Gastrocnemius medialis (tissue), 4 donors: ENCODE measurements at regions of chr7 and their contacts with region 1.

Region 1: DNA sequence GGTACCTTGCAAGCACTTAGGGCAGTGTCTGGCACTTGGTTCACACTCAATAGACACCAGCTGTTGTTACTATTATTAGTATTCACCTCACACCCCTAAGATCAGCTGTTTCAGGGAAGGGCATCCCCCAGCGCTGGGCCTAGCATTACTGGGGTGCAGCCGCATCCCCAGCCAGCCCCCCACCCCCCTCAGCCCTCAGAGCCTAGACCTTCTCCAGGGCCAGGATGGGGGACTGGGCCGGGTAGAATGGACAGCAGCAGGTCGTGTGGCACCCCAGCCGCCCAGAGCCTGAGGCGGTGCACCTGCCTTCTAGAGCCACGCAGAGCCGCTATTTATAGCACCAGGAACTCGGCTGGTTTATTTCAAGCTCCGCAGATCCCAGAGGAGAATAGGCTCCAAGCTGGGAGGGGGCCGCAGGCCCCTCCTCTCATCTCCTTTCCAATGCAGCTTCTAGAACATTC is 60.5 kb downstream of the GTF2IRD1 start:
- DNase-seq: peak; percentile 68 to 78
- ATAC-seq: peak; percentile 93 to 94
- H3K4me3 ChIP-seq: peak overlapping the region in 1 of 4 donors; percentile 6
- H3K27ac ChIP-seq: peak overlapping the region; percentile 90 to 96 (median 94)
- H3K4me1 ChIP-seq: peaks cover 26% of the 10 kb centered on the region in 2 donors
- H3K27me3 ChIP-seq: no peaks in the 10 kb centered on the region
- CTCF ChIP-seq: no peak
- POLR2A ChIP-seq: peak; percentile 49 to 74

Region 2: GRCh38 chr7:74443543-74444247 is 70.5 kb before region 1 on chr7:
- in situ Hi-C with region 1: loop called in 1 of 4 experiments (anchors 5 kb)
- intact Hi-C with region 1: no loop called
- DNase-seq: no peak
- ATAC-seq: no peak
- H3K4me3 ChIP-seq: no peak overlapping the region
- H3K27ac ChIP-seq: no peak overlapping the region
- H3K4me1 ChIP-seq: no peaks in the 10 kb centered on the region
- H3K27me3 ChIP-seq: no peaks in the 10 kb centered on the region
- CTCF ChIP-seq: no peak
- POLR2A ChIP-seq: no peak

Region 3: DNA sequence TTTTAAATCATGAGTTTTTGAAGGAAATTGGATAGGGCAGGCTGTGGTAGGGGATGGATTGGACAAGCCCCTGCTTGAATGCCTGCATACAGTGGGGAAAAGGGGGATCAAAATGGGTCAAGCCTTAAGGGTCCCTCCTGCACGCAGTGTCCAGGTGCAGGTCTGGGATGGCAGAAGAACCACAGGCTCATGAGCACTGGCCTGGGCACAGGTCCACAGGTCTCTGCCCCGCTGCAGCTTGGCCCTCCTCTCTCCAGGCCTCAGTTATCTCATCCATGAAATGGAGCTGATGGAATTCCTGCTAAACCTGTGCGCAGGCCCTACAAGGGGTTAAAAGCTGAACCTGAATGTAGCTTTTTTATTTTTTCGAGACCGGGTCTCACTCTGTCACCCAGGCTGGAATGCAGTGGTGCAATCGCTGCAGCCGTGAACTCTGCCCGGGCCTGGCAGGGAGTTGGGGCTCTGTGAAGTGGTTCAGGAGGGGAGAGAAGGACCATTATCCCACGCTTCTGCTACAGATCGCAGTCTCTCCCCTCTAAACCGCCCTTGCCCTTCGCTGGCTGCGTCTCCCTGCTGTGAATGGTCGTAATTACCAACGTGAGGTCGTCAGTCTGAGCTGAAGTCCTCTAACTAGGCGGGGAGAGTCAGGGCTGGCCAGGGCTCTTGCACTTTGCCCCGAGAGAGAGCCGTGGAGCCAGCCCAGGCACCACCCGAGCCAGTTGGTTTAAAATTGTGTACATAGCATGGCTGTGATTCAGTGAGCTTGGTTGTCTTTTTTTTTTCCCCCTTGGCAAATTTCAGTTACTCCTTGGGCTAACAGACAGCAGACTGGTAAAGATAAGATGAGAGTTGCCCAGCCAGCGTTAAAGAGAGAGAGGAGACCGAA is 65.9 kb after region 1 on chr7:
- in situ Hi-C with region 1: no loop called
- intact Hi-C with region 1: no loop called
- DNase-seq: no peak
- ATAC-seq: peak in 1 of 2 donors; percentile 25
- H3K4me3 ChIP-seq: no peak overlapping the region
- H3K27ac ChIP-seq: peak overlapping the region; percentile 14 to 61 (median 24)
- H3K4me1 ChIP-seq: peaks cover 0 to 13% of the 10 kb centered on the region in 2 donors
- H3K27me3 ChIP-seq: no peaks in the 10 kb centered on the region
- CTCF ChIP-seq: no peak
- POLR2A ChIP-seq: no peak

Region 4: DNA sequence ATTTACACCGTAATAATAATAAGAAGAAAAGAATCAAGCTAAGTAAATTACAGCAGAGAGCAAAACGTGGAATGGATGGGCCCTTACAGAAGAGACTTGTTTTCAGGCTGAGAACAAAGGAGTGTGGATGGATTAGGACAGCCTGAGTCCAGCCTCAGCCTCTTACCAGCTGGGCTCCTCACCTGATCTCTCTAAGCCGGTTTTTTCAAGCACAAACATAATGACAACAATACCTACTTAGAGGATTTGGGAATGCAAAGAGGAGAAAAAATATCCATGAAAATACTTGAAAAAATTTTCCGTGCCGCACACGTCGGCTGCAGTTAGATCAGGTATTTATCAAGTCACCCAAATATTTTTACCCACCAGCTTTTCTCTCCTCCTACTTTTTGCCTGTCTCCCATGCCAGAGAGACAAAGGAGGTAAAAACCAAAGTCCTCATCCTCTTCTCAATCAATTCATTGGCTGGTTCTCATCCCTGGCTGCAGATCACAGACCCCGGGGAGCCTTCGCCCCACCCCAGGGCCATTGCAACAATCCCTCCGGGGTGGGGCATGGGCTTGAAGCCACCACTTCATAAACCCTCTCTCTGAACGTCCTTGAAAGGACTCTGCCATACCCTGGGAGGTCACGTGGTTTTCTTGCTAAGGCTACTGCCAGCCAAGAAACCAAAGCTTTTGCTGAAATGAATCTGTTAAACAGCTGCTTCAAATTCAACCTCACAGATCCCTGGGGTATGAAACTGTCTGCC is 113.7 kb after region 1 on chr7:
- in situ Hi-C with region 1: no loop called
- intact Hi-C with region 1: no loop called
- DNase-seq: peak in 1 of 2 donors; percentile 77
- ATAC-seq: peak; percentile 59 to 84
- H3K4me3 ChIP-seq: peak overlapping the region in 1 of 4 donors; percentile 4
- H3K27ac ChIP-seq: peak overlapping the region; percentile 63 to 77 (median 74)
- H3K4me1 ChIP-seq: peaks cover 21% of the 10 kb centered on the region in 2 donors
- H3K27me3 ChIP-seq: no peaks in the 10 kb centered on the region
- CTCF ChIP-seq: no peak
- POLR2A ChIP-seq: no peak

Region 5: GRCh38 chr7:74718336-74718735 is 204.2 kb after region 1 on chr7:
- in situ Hi-C with region 1: no loop called
- intact Hi-C with region 1: no loop called
- DNase-seq: no peak
- ATAC-seq: no peak
- H3K4me3 ChIP-seq: no peak overlapping the region
- H3K27ac ChIP-seq: no peak overlapping the region
- H3K4me1 ChIP-seq: no peaks in the 10 kb centered on the region
- H3K27me3 ChIP-seq: no peaks in the 10 kb centered on the region
- CTCF ChIP-seq: no peak
- POLR2A ChIP-seq: no peak